WTC11 (cell line): ENCODE measurements at regions of chr20 and their contacts with region 1.

Region 1: GRCh38 chr20:21125849-21126580 is at the start of gene KIZ:
- DNase-seq: peak; percentile 98
- ATAC-seq: peak; percentile 94
- H3K4me3 Mint-ChIP-seq: peak within 1 kb of the TSS; percentile 95
- H3K27ac Mint-ChIP-seq: peak within 1 kb of the TSS; percentile 99
- H3K4me1 Mint-ChIP-seq: peaks cover 45% of the 10 kb centered on the region
- H3K27me3 Mint-ChIP-seq: peaks cover 2% of the 10 kb centered on the region
- CTCF ChIP-seq: no peak
- total RNA-seq, gene KIZ: 39.6 to 43.6 TPM (median 41.8 TPM) in 3 replicates

Region 2: DNA sequence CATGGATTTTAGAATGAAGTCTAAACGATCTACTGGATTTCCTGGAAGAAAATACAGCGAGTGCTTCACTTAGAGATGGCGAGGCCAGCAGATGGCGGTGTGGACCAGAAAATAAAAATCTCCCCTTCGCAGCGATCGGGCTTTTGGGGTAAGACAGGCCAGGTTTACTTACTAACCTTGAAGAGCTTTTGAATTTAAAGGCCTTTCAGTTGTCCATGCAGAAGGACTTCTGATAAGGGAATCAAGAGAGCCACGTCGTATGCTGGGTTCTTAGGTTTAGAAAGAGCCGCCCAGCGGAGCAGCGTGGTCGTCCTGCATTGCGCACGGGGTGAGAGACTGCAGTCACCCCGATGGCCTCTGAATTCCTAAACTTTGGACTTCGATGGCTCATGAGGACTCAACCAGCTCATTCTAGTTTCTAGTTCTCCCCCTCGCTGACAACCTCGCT is 288.4 kb before region 1 on chr20:
- CTCF ChIA-PET with region 1: interaction called, 10 read pairs
- POLR2A ChIA-PET with region 1: no interaction called
- DNase-seq: peak; percentile 68
- ATAC-seq: peak; percentile 78
- H3K4me3 Mint-ChIP-seq: peak overlapping the region; percentile 46
- H3K27ac Mint-ChIP-seq: no peak overlapping the region
- H3K4me1 Mint-ChIP-seq: peaks cover 6% of the 10 kb centered on the region; the same call in 1 of the 2 replicates
- H3K27me3 Mint-ChIP-seq: peaks cover 3% of the 10 kb centered on the region
- CTCF ChIP-seq: peak; percentile 67

Region 3: GRCh38 chr20:21099751-21100577 is 26.1 kb before region 1 on chr20:
- CTCF ChIA-PET with region 1: interaction called, 13 read pairs
- POLR2A ChIA-PET with region 1: interaction called, 9 read pairs
- DNase-seq: peak; percentile 60
- ATAC-seq: no peak
- H3K4me3 Mint-ChIP-seq: peak overlapping the region; percentile 87
- H3K27ac Mint-ChIP-seq: peak overlapping the region; percentile 95
- H3K4me1 Mint-ChIP-seq: peaks cover 55% of the 10 kb centered on the region
- H3K27me3 Mint-ChIP-seq: peaks cover 85% of the 10 kb centered on the region
- CTCF ChIP-seq: no peak

Region 4: GRCh38 chr20:21114584-21114983 is 11.4 kb before region 1 on chr20:
- CTCF ChIA-PET with region 1: interaction called, 16 read pairs
- POLR2A ChIA-PET with region 1: interaction called, 3 read pairs
- DNase-seq: no peak
- ATAC-seq: peak; percentile 61; the same call in 1 of the 2 replicates
- H3K4me3 Mint-ChIP-seq: no peak overlapping the region
- H3K27ac Mint-ChIP-seq: no peak overlapping the region; the same call in 1 of the 2 replicates
- H3K4me1 Mint-ChIP-seq: peaks cover 16% of the 10 kb centered on the region
- H3K27me3 Mint-ChIP-seq: no peaks in the 10 kb centered on the region; the same call in 1 of the 2 replicates
- CTCF ChIP-seq: no peak

Region 5: DNA sequence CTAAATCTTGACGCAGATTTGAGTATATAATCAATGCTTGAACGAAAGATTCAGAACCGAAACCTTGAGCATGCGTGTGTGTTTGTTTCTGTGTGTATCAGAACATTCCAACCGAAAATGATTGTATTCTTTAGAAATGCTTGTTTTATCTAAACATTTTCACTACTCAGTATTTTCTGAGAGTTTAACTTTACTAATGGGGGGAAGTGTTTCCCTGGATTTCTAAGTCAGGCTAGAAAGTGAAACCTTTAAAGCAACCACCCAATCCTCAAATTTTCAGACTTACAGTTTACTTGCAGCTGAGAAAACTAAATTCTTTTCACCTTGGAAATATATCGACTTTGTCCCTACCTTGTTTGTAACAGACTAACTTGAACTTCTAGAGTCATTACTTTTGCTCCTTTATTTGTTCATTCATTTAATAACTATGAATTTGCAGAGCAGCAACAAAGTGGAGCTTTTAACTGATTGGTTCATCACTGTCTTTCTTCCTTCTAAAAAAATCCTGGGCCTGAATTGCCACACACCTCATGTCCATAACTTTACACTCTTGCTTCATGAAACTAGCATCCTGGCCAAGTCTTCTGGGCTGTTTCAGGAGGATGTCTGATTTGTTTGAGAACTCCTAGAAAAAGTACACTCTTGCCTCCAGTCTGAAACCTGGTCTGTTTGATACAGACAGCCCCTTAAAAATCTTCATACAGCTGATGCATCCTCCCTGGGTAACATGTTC is 99.4 kb after region 1 on chr20:
- CTCF ChIA-PET with region 1: no interaction called
- POLR2A ChIA-PET with region 1: no interaction called
- DNase-seq: no peak
- ATAC-seq: no peak
- H3K4me3 Mint-ChIP-seq: no peak overlapping the region
- H3K27ac Mint-ChIP-seq: peak overlapping the region; percentile 76
- H3K4me1 Mint-ChIP-seq: peaks cover 45% of the 10 kb centered on the region
- H3K27me3 Mint-ChIP-seq: no peaks in the 10 kb centered on the region
- CTCF ChIP-seq: no peak